Head of caudate nucleus (tissue), 42 donors: ENCODE measurements at regions of chr6 and their contacts with region 1.

Region 1: DNA sequence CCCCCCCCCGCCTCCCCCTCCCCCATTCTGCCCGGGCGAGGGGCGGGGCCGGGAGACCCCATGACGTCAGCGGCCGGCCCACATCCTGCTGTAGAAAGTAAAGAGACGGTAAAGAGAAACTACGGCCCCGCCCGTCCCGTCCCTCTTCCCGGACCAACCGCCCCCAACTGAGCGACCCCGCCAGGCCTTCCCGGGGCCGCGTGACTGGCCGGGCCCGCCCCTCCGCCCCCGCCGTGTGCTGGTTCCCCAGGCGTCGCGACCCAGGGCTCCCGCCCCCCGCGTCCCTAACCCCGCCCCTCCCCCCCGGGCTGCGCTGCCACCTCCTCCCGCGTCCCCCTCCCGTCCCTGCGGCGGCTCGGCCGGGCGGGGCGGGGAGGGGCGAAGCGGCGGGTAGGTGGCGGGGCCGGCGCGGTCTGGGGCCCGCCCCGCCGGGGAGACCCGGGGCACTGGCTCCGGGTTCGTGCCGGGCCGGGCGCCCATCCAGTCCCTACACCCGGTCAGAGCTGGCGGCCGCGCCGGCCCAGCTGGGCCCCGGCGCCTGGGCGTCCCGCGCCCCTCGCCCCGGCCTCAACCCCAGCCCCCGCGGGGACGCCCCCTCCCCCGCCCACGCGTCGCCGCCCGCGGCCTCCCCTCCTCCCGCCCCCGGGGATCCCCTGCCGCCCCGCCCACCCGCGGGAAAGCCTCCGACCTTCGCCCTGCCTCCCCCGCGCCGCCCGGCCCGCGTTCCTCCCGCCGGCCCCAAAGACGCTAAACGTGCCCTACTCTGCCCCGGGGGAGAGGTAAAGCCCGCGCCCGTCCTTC is 636 bp upstream of the HIVEP1 start:
- DNase-seq: peak; percentile 87 to 97 (median 92)

Region 2: GRCh38 chr6:11537229-11538051 is 474.0 kb before region 1 on chr6 and contains the start of gene TMEM170B:
- intact Hi-C with region 1: loop called (anchors 5 kb)
- DNase-seq: peak; percentile 91 to 99 (median 97)